Dendritic cell treated with granulocyte-macrophage colony-stimulating factor and Interleukin-4, amounts not matched to agents 40 ng/mL and 50 ng/mL, for 4 days (primary cell): ENCODE measurements at regions of chr11 and their contacts with region 1.

Region 1: GRCh38 chr11:18775492-18776292 is 15.9 kb downstream of the PTPN5 start:
- H3K4me3 Mint-ChIP-seq: no peak overlapping the region
- H3K27ac Mint-ChIP-seq: no peak overlapping the region
- H3K4me1 Mint-ChIP-seq: no peaks in the 10 kb centered on the region
- H3K27me3 Mint-ChIP-seq: peaks cover 15% of the 10 kb centered on the region

Region 2: GRCh38 chr11:18802381-18803257 is 26.9 kb after region 1 on chr11:
- intact Hi-C with region 1: loop called (anchors 2 kb)
- H3K4me3 Mint-ChIP-seq: no peak overlapping the region
- H3K27ac Mint-ChIP-seq: no peak overlapping the region
- H3K4me1 Mint-ChIP-seq: peaks cover 5% of the 10 kb centered on the region
- H3K27me3 Mint-ChIP-seq: peaks cover 26% of the 10 kb centered on the region

Region 3: DNA sequence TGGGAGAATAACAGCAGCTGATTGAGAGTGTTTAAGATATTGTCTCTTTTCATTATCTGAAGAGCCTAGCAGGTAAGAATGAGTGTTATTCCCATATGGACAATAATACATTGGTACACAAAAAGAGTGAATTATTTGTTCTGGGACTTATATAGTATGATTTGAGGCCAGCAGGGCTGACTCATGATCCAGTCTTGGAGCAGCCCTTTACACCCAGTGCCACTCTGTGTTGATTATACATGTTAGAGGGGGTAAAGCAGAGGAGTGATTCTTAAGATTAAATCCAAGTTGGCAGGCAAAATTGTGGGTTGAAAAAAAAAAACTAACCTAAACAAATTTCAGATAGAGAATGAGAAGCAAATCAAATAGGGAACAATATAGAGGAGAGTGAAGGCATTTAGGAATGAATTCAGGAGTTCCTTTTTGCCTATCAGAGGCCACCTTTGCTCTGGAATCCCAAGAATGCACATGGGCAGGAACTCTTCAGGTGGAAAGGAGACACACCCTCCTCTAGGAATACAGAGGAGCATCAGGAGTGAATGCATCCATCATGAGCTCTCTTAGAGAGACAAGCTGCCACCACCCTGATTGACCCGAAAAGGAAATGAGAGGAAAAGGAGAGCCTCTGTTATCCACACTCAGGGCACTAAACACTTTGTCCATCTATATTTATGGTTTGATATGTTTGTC is 182.7 kb after region 1 on chr11:
- intact Hi-C with region 1: no loop called
- H3K4me3 Mint-ChIP-seq: no peak overlapping the region
- H3K27ac Mint-ChIP-seq: no peak overlapping the region
- H3K4me1 Mint-ChIP-seq: no peaks in the 10 kb centered on the region
- H3K27me3 Mint-ChIP-seq: no peaks in the 10 kb centered on the region